Heart left ventricle (tissue), 16 donors: ENCODE measurements at regions of chr1 and their contacts with region 1.

Region 1: GRCh38 chr1:61170328-61171238 is 88.2 kb downstream of the NFIA start:
- DNase-seq: no peak
- ATAC-seq: peak in 3 of 4 donors; percentile 34 to 59 (median 48)
- H3K4me3 ChIP-seq: no peak overlapping the region
- H3K27ac ChIP-seq: peak overlapping the region in 9 of 12 donors; percentile 14 to 68 (median 40)
- H3K4me1 ChIP-seq: peaks cover 12 to 83% (median 61%) of the 10 kb centered on the region in 12 donors
- H3K27me3 ChIP-seq: no peaks in the 10 kb centered on the region
- CTCF ChIP-seq: no peak
- POLR2A ChIP-seq: no peak

Region 2: DNA sequence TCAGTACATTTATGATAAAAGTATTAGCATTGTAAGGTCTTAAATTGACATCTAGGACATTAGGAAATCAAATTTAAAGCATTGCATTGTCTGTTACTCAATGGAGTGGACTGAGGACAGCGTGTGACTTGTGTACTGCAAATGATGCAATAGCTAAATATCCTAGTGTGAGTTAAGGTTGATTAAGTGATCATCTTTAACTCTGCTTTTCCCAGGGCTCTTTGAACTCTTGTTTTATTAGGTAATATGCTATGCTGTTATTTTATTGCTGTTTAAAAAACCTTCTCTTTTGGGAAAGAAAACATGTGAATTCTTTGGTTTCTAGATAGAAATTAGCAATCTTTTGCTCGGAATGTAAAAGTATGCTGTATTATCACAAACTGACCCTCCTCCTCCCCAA is 49.6 kb before region 1 on chr1:
- intact Hi-C with region 1: loop called in 1 of 10 experiments (anchors 10 kb)
- DNase-seq: no peak
- ATAC-seq: peak; percentile 67 to 80 (median 77)
- H3K4me3 ChIP-seq: peak overlapping the region in 9 of 12 donors; percentile 20 to 45 (median 27)
- H3K27ac ChIP-seq: peak overlapping the region; percentile 24 to 78 (median 70)
- H3K4me1 ChIP-seq: peaks cover 14 to 95% (median 70%) of the 10 kb centered on the region in 12 donors
- H3K27me3 ChIP-seq: no peaks in the 10 kb centered on the region
- CTCF ChIP-seq: no peak
- POLR2A ChIP-seq: no peak

Region 3: GRCh38 chr1:61132176-61133001 is 38.2 kb before region 1 on chr1:
- intact Hi-C with region 1: loop called in 2 of 10 experiments (anchors 5 to 10 kb)
- DNase-seq: no peak
- ATAC-seq: peak in 3 of 4 donors; percentile 57 to 60 (median 58)
- H3K4me3 ChIP-seq: peak overlapping the region in 8 of 12 donors; percentile 4 to 31 (median 18)
- H3K27ac ChIP-seq: peak overlapping the region in 11 of 12 donors; percentile 50 to 88 (median 63)
- H3K4me1 ChIP-seq: peaks cover 6 to 64% (median 27%) of the 10 kb centered on the region in 12 donors
- H3K27me3 ChIP-seq: no peaks in the 10 kb centered on the region
- CTCF ChIP-seq: no peak
- POLR2A ChIP-seq: no peak